Activated T-helper 2 cell treated with anti-CD3 and anti-CD28 coated beads, Interferon-gamma antibody, Interleukin-2, Interleukin-4, amounts not matched to agents 10 μg/mL and 5 μg/mL and 100 μg/mL, durations not matched to agents 14 hours and 24 hours and 36 hours (primary cell): ENCODE measurements at regions of chr10 and their contacts with region 1.

Region 1: DNA sequence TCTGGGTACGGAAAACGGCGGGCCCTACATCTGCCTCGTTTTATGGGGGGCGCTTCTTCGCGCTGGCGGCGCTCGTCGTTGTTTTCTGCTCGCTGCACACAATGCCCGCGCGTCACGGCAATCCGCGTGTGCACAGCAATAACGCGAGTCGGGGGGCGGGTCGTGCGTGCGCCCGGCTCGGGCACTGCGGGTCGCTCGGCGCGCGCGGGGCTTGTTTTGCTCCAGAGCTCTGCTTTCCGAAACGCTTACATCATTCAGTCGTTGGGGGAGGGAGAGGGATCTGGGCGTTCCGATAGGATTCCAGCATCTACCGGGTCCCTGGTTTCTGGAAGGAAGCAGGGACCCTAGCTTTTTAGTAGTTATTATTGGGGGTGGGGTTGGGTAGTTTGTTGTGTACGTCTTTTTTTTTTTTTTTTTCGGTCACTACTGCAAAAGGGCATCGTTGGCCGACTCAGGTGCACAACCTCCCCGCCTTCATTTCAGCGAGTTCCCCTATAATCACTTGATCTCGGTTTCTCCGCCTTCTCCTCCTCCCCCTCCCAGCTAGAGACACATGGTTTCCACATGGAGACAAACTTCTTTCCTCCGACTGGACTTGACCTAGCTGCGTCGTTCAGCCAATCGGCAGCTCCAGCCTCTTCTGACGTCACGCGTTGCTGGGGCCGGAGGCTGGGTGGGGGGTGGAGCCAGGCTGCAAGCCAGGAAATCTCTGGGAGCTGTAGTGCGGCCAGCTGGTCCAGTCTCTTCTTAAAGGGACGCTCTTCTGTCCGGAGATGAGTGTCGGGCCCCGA is 3.5 kb downstream of the MXI1 start:
- DNase-seq: peak; percentile 89
- H3K4me3 Mint-ChIP-seq: peak overlapping the region; percentile 89
- H3K27ac Mint-ChIP-seq: peak overlapping the region; percentile 93
- H3K4me1 Mint-ChIP-seq: peaks cover 61% of the 10 kb centered on the region
- H3K27me3 Mint-ChIP-seq: peaks cover 21% of the 10 kb centered on the region

Region 2: GRCh38 chr10:109922976-109923921 is 287.6 kb before region 1 on chr10 and contains the start of gene XPNPEP1:
- intact Hi-C with region 1: loop called (anchors 5 kb)
- DNase-seq: peak; percentile 75
- H3K4me3 Mint-ChIP-seq: peak within 1 kb of the TSS; percentile 91
- H3K27ac Mint-ChIP-seq: peak within 1 kb of the TSS; percentile 90
- H3K4me1 Mint-ChIP-seq: peaks cover 41% of the 10 kb centered on the region
- H3K27me3 Mint-ChIP-seq: peaks cover 7% of the 10 kb centered on the region
- total RNA-seq, gene XPNPEP1: 79.4 and 88.2 TPM in 2 replicates

Region 3: GRCh38 chr10:110076559-110077318 is 134.1 kb before region 1 on chr10:
- intact Hi-C with region 1: loop called (anchors 5 kb)
- DNase-seq: peak; percentile 41
- H3K4me3 Mint-ChIP-seq: peak overlapping the region; percentile 79
- H3K27ac Mint-ChIP-seq: peak overlapping the region; percentile 95
- H3K4me1 Mint-ChIP-seq: peaks cover 70% of the 10 kb centered on the region
- H3K27me3 Mint-ChIP-seq: no peaks in the 10 kb centered on the region

Region 4: GRCh38 chr10:110156046-110156445 is 54.8 kb before region 1 on chr10:
- intact Hi-C with region 1: loop called (anchors 2 kb)
- DNase-seq: no peak
- H3K4me3 Mint-ChIP-seq: no peak overlapping the region
- H3K27ac Mint-ChIP-seq: no peak overlapping the region
- H3K4me1 Mint-ChIP-seq: peaks cover 36% of the 10 kb centered on the region
- H3K27me3 Mint-ChIP-seq: peaks cover 69% of the 10 kb centered on the region

Region 5: GRCh38 chr10:110279407-110279986 is 68.6 kb after region 1 on chr10:
- intact Hi-C with region 1: loop called (anchors 2 kb)
- DNase-seq: peak; percentile 17
- H3K4me3 Mint-ChIP-seq: no peak overlapping the region
- H3K27ac Mint-ChIP-seq: no peak overlapping the region
- H3K4me1 Mint-ChIP-seq: peaks cover 8% of the 10 kb centered on the region
- H3K27me3 Mint-ChIP-seq: peaks cover 31% of the 10 kb centered on the region